ENCODE measurements at regions of chr11 and their contacts with region 1.

Region 1: GRCh38 chr11:67391304-67392132 is at the start of gene RAD9A:
- DNase-seq: peak; percentile 80 to 94 (median 87)
- ATAC-seq: peak; percentile 90
- H3K4me3 ChIP-seq: peak within 1 kb of the TSS; percentile 49
- H3K4me3 Mint-ChIP-seq: peak within 1 kb of the TSS; percentile 84 to 95 (median 88)
- H3K27ac ChIP-seq: peak within 1 kb of the TSS; percentile 83
- H3K27ac Mint-ChIP-seq: peak within 1 kb of the TSS; percentile 47 to 92 (median 82)
- H3K4me1 ChIP-seq: peaks cover 15 to 16% of the 10 kb centered on the region in 2 donors
- H3K4me1 Mint-ChIP-seq: peaks cover 27 to 47% (median 34%) of the 10 kb centered on the region in 7 donors
- H3K27me3 ChIP-seq: no peaks in the 10 kb centered on the region
- H3K27me3 Mint-ChIP-seq: peaks cover 0 to 3% (median 0%) of the 10 kb centered on the region in 5 donors
- total RNA-seq, gene RAD9A: 25.6 to 48.0 (median 45.0) TPM

Region 2: DNA sequence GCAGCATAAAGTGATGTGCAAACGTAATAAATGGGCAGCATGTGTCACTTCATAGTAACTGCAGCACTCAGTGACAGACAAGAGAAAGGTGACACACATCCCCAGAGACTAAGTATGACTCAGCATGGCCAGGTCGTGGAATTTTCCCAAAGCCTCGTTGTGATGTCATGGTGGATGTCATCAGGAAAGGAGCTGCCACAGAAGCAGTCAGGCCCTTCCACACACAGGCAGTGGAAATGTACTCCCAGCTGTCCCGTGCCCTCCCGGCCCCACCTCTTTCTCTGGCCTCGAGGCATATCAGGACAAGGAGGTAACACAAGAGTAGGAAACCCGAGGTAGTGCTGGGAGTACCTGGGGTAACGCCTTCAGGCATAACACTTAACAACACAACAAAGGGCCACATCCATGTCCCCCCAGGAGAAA is 441.4 kb before region 1 on chr11:
- CTCF ChIA-PET with region 1: no interaction called
- POLR2A ChIA-PET with region 1: no interaction called
- intact Hi-C with region 1: no loop called
- DNase-seq: no peak
- ATAC-seq: no peak
- H3K4me3 ChIP-seq: no peak overlapping the region
- H3K4me3 Mint-ChIP-seq: no peak overlapping the region
- H3K27ac ChIP-seq: no peak overlapping the region
- H3K27ac Mint-ChIP-seq: no peak overlapping the region
- H3K4me1 ChIP-seq: no peaks in the 10 kb centered on the region
- H3K4me1 Mint-ChIP-seq: peaks cover 0 to under 1% (median 0%) of the 10 kb centered on the region in 7 donors
- H3K27me3 ChIP-seq: no peaks in the 10 kb centered on the region
- H3K27me3 Mint-ChIP-seq: no peaks in the 10 kb centered on the region

Region 3: DNA sequence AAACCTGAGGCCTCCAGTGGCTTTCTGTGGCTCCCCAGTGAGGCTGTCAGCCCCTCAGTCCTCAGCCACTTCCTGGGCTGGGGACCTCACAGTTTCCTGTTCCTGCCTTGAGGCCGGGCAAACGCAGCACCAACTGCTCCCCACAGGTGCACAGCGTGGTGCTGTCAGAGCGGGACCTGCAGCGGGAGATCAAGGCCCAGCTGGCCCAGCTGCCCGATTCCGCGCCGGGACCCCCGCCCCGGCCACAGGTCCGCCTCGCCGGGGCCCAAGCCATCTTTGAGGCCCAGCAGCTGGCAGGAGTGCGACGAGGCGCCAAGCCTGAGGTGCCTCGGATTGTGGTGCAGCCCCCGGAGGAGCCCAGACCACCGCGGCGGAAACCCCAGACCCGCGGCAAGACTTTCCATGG is 17.7 kb after region 1 on chr11:
- CTCF ChIA-PET with region 1: interaction called, 5 read pairs
- POLR2A ChIA-PET with region 1: interaction called, 1,530 read pairs
- intact Hi-C with region 1: no loop called
- DNase-seq: peak in 8 of 9 donors; percentile 62 to 82 (median 78)
- ATAC-seq: peak; percentile 78
- H3K4me3 ChIP-seq: peak overlapping the region; percentile 98
- H3K4me3 Mint-ChIP-seq: peak overlapping the region; percentile 80 to 100 (median 96)
- H3K27ac ChIP-seq: peak overlapping the region; percentile 87
- H3K27ac Mint-ChIP-seq: peak overlapping the region; percentile 83 to 98 (median 93)
- H3K4me1 ChIP-seq: peaks cover 86% of the 10 kb centered on the region in 2 donors
- H3K4me1 Mint-ChIP-seq: peaks cover 52 to 90% (median 78%) of the 10 kb centered on the region in 7 donors
- H3K27me3 ChIP-seq: no peaks in the 10 kb centered on the region
- H3K27me3 Mint-ChIP-seq: peaks cover 0 to 8% (median 0%) of the 10 kb centered on the region in 5 donors

Region 4: GRCh38 chr11:67428052-67428914 is 36.8 kb after region 1 on chr11 and contains the start of gene RPS6KB2:
- CTCF ChIA-PET with region 1: interaction called, 3 read pairs
- POLR2A ChIA-PET with region 1: interaction called, 1,530 read pairs
- intact Hi-C with region 1: loop called (anchors 1 to 5 kb)
- DNase-seq: peak; percentile 95 to 100 (median 98)
- ATAC-seq: peak; percentile 97
- H3K4me3 ChIP-seq: peak within 1 kb of the TSS; percentile 82
- H3K4me3 Mint-ChIP-seq: peak within 1 kb of the TSS; percentile 92 to 100 (median 98)
- H3K27ac ChIP-seq: peak within 1 kb of the TSS; percentile 97
- H3K27ac Mint-ChIP-seq: peak within 1 kb of the TSS; percentile 94 to 98 (median 96)
- H3K4me1 ChIP-seq: peaks cover 19 to 38% of the 10 kb centered on the region in 2 donors
- H3K4me1 Mint-ChIP-seq: peaks cover 19 to 62% (median 43%) of the 10 kb centered on the region in 7 donors
- H3K27me3 ChIP-seq: no peaks in the 10 kb centered on the region
- H3K27me3 Mint-ChIP-seq: no peaks in the 10 kb centered on the region
- total RNA-seq, gene RPS6KB2: 61.9 to 83.9 (median 77.7) TPM

Measured in naive thymus-derived CD4-positive, alpha-beta T cell (primary cell).